Naive thymus-derived CD4-positive, alpha-beta T cell (primary cell): ENCODE measurements at regions of chr7 and their contacts with region 1.

Region 1: DNA sequence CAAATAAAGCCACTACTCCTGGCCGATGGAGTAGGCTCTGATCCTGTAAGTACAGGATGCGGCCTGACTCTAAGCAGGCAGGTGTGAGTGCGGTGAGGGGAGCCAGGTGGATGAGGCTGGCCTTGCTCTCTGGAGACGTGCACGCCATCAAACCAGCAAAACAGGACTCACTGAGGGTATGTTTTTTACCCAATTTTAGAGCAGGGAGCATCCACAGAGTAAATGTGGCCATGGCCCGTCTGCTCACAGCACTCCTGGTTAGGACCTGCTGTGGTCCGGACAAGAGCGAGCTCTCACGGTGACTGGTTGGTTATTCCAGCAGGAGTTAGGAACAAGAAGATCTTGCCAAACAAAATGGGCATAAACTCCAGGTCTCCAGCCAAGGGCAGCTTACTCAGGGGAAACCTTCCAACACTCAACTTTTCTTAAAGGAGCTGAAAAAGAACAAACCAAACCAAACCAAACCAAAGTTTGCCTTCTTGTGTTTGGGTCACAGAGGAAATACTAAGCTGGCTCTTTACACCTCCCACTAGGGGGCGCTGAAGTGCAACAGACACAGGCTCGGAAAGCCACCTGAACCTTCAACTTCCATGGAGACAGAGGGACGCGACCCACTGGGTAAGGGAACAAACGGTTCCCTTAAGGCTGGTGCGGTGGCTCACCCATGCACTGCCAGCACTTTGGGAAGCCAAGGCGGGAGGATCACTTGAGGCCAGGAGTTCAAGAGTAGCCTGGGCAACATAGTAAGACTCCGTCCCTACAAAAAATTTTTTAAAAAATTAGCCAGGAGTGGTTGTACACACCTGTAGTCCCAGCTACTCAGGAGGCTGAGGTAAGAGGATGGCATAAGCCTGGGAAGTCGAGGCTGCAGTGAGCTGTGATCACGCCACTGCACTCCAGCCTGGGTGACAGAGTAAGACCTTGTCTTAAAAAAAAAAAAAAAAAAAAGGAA is 122.4 kb downstream of the CLEC2L start:
- DNase-seq: peak; percentile 72 to 93 (median 80)
- ATAC-seq: peak; percentile 73
- H3K4me3 ChIP-seq: no peak overlapping the region
- H3K4me3 Mint-ChIP-seq: peak overlapping the region in 8 of 10 donors; percentile 44 to 77 (median 61)
- H3K27ac ChIP-seq: no peak overlapping the region
- H3K27ac Mint-ChIP-seq: peak overlapping the region in 7 of 9 donors; percentile 46 to 92 (median 64)
- H3K4me1 ChIP-seq: peaks cover 0 to 78% of the 10 kb centered on the region in 2 donors
- H3K4me1 Mint-ChIP-seq: peaks cover 61 to 96% (median 87%) of the 10 kb centered on the region in 7 donors
- H3K27me3 ChIP-seq: no peaks in the 10 kb centered on the region
- H3K27me3 Mint-ChIP-seq: no peaks in the 10 kb centered on the region

Region 2: DNA sequence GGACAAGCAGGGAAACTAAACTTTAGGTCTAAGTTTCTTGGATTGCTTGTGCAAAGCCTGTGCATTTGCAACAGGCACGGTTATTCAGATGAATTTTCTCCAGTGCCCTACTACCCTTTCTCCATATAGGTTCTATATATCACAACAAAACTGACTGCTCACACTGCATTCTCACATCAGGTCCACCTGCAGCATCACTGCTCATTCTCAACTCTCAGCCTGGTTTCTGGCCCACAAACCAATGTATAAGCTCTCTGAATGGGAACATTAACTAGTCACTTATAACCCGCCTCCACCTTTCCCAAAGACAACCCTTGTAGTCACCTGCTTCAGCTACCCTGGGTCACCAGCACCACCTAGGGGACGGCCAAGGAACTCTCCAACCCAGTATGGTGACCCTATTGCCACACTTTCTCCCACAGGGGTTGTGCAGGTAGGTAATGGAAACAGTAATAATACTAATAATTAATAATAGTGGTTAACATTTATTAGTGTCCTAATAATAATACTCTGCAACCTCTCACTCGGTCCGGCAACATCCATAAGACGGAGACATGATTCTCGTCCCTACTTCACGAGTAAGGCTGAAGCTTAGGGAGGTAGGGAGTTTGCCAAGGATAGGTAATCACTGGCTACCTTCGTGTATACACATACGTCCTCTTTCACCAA is 25.0 kb before region 1 on chr7:
- CTCF ChIA-PET with region 1: interaction called, 57 read pairs
- POLR2A ChIA-PET with region 1: interaction called, 5 read pairs
- intact Hi-C with region 1: loop called (anchors 1 to 2 kb)
- DNase-seq: peak in 8 of 9 donors; percentile 27 to 58 (median 54)
- ATAC-seq: peak; percentile 86
- H3K4me3 ChIP-seq: no peak overlapping the region
- H3K4me3 Mint-ChIP-seq: peak overlapping the region in 1 of 10 donors; percentile 10
- H3K27ac ChIP-seq: no peak overlapping the region
- H3K27ac Mint-ChIP-seq: peak overlapping the region in 6 of 9 donors; percentile 0 to 82 (median 42)
- H3K4me1 ChIP-seq: peaks cover 0 to 8% of the 10 kb centered on the region in 2 donors
- H3K4me1 Mint-ChIP-seq: peaks cover 16 to 47% (median 36%) of the 10 kb centered on the region in 7 donors
- H3K27me3 ChIP-seq: no peaks in the 10 kb centered on the region
- H3K27me3 Mint-ChIP-seq: no peaks in the 10 kb centered on the region

Region 3: GRCh38 chr7:139635526-139636302 is 10.1 kb before region 1 on chr7:
- CTCF ChIA-PET with region 1: interaction called, 21 read pairs
- POLR2A ChIA-PET with region 1: interaction called, 5 read pairs
- intact Hi-C with region 1: no loop called
- DNase-seq: peak; percentile 45 to 94 (median 91)
- ATAC-seq: peak; percentile 95
- H3K4me3 ChIP-seq: peak overlapping the region; percentile 31
- H3K4me3 Mint-ChIP-seq: peak overlapping the region; percentile 64 to 92 (median 84)
- H3K27ac ChIP-seq: peak overlapping the region; percentile 78
- H3K27ac Mint-ChIP-seq: peak overlapping the region; percentile 90 to 99 (median 98)
- H3K4me1 ChIP-seq: peaks cover 4 to 53% of the 10 kb centered on the region in 2 donors
- H3K4me1 Mint-ChIP-seq: peaks cover 46 to 92% (median 80%) of the 10 kb centered on the region in 7 donors
- H3K27me3 ChIP-seq: no peaks in the 10 kb centered on the region
- H3K27me3 Mint-ChIP-seq: no peaks in the 10 kb centered on the region

Region 4: DNA sequence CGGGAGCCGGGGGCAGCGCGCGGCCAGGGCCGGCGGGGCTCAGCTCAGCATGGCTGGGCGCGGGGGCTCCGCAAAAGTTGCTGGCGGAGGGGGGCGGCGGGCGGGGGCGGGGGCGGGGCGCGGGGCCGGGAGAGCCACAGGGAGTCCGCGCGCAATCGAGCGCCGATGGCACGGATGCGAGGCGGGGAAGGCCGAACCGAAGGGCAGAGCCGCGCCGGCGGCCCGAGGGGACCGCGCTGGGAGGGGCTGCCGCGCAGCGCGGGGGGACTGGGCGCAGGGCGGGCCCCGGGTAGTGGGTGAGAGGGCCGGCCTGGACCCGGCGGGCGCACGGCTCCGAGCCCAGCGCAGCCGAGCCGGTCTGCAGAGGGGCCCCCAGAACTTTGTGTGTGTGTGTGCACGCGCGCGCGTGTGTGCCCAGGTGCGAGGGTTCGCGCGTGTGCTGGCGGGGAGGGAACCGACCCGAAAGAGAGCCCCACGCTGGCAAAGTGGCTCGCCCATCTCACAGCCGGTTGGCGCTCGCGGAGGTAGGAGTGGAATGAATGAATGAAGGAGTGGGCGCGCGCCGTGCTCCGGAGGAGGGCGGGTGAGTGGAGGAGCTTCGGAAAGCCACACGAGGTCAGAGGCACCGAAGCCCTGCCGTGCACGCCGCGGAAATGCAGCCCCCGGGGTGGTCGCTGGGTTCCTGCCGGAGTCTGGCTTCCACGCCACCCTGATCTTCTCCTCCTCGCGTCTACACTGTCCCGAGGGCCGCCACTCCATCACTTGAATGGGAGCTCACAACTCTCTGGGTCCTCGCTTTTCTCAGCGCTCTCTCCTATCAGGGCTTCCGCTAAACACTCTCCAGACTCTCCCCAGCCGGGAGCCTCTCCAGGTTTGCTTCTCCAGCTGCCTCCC is 132.3 kb after region 1 on chr7 and contains the start of gene HIPK2:
- CTCF ChIA-PET with region 1: interaction called, 13 read pairs
- POLR2A ChIA-PET with region 1: no interaction called
- intact Hi-C with region 1: loop called (anchors 1 to 2 kb)
- DNase-seq: peak; percentile 54 to 75 (median 67)
- ATAC-seq: peak; percentile 79
- H3K4me3 ChIP-seq: peak within 1 kb of the TSS; percentile 85
- H3K4me3 Mint-ChIP-seq: peak within 1 kb of the TSS; percentile 94 to 100 (median 98)
- H3K27ac ChIP-seq: peak within 1 kb of the TSS; percentile 89
- H3K27ac Mint-ChIP-seq: peak within 1 kb of the TSS; percentile 95 to 98 (median 97)
- H3K4me1 ChIP-seq: peaks cover 4 to 26% of the 10 kb centered on the region in 2 donors
- H3K4me1 Mint-ChIP-seq: peaks cover 41 to 53% (median 49%) of the 10 kb centered on the region in 7 donors
- H3K27me3 ChIP-seq: no peaks in the 10 kb centered on the region
- H3K27me3 Mint-ChIP-seq: peaks cover 0 to 24% (median 5%) of the 10 kb centered on the region in 5 donors
- total RNA-seq, gene HIPK2: 27.3 to 44.0 (median 37.3) TPM

Region 5: GRCh38 chr7:139982927-139983920 is 337.4 kb after region 1 on chr7:
- CTCF ChIA-PET with region 1: interaction called, 3 read pairs
- POLR2A ChIA-PET with region 1: no interaction called
- intact Hi-C with region 1: loop called in 1 of 2 experiments (anchors 5 kb)
- DNase-seq: no peak
- ATAC-seq: no peak
- H3K4me3 ChIP-seq: no peak overlapping the region
- H3K4me3 Mint-ChIP-seq: no peak overlapping the region
- H3K27ac ChIP-seq: no peak overlapping the region
- H3K27ac Mint-ChIP-seq: no peak overlapping the region
- H3K4me1 ChIP-seq: peaks cover 9 to 10% of the 10 kb centered on the region in 2 donors
- H3K4me1 Mint-ChIP-seq: peaks cover 8 to 19% (median 17%) of the 10 kb centered on the region in 7 donors
- H3K27me3 ChIP-seq: no peaks in the 10 kb centered on the region
- H3K27me3 Mint-ChIP-seq: peaks cover 0 to 22% (median 0%) of the 10 kb centered on the region in 5 donors

Region 6: GRCh38 chr7:140304191-140304799 is 658.4 kb after region 1 on chr7:
- CTCF ChIA-PET with region 1: no interaction called
- POLR2A ChIA-PET with region 1: no interaction called
- intact Hi-C with region 1: loop called in 1 of 2 experiments (anchors 1 kb)
- DNase-seq: peak in 8 of 9 donors; percentile 30 to 75 (median 58)
- ATAC-seq: peak; percentile 93
- H3K4me3 ChIP-seq: no peak overlapping the region
- H3K4me3 Mint-ChIP-seq: peak overlapping the region in 1 of 10 donors; percentile 12
- H3K27ac ChIP-seq: no peak overlapping the region
- H3K27ac Mint-ChIP-seq: peak overlapping the region; percentile 3 to 81 (median 62)
- H3K4me1 ChIP-seq: no peaks in the 10 kb centered on the region
- H3K4me1 Mint-ChIP-seq: peaks cover 0 to 7% (median 6%) of the 10 kb centered on the region in 7 donors
- H3K27me3 ChIP-seq: no peaks in the 10 kb centered on the region
- H3K27me3 Mint-ChIP-seq: no peaks in the 10 kb centered on the region